Activated T-helper 1 cell treated with anti-CD3 and anti-CD28 coated beads, Interleukin-12 subunit alpha, Interleukin-12 subunit beta, Interleukin-2, Interleukin-4 antibody, amounts not matched to agents 30 ng/mL and 10 ng/mL and 1 ng/mL, durations not matched to agents 14 hours and 24 hours and 36 hours (primary cell): ENCODE measurements at regions of chr10 and their contacts with region 1.

Region 1: GRCh38 chr10:88117869-88118632 is 254.6 kb downstream of the PTEN start:
- DNase-seq: no peak
- H3K4me3 Mint-ChIP-seq: no peak overlapping the region
- H3K27ac Mint-ChIP-seq: no peak overlapping the region
- H3K4me1 Mint-ChIP-seq: peaks cover 18% of the 10 kb centered on the region
- H3K27me3 Mint-ChIP-seq: peaks cover 3% of the 10 kb centered on the region

Region 2: DNA sequence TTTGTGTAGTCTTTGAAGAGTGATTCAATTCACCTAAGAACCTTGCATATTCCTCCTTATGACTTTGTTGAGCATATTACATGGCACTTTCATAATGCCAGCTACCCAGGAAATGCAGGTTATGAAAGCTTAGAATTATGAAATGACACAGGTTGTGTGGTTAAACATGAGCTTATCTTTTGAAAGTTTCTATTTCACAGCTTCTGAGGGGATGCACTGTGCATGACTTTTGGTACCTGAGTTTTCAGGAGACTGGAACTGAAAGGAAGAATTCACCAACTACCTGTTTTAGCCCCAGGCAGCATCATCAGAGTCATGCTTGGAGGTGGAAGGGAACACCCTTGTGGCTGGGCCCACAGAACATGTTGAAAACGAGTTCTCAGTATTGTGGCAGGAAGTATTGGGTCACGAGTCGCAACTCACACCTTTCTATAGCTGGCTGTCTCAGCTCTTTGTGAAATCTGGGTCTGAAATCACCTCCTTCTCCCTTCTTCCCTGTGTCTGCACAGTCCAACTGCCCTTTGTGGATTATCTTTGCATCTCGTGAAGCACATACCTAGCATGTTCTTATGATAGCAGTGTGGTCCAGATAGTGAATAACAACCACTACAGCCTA is 26.5 kb before region 1 on chr10:
- intact Hi-C with region 1: loop called (anchors 1 kb)
- DNase-seq: peak; percentile 76
- H3K4me3 Mint-ChIP-seq: peak overlapping the region; percentile 13
- H3K27ac Mint-ChIP-seq: peak overlapping the region; percentile 68
- H3K4me1 Mint-ChIP-seq: peaks cover 35% of the 10 kb centered on the region
- H3K27me3 Mint-ChIP-seq: peaks cover 29% of the 10 kb centered on the region

Region 3: DNA sequence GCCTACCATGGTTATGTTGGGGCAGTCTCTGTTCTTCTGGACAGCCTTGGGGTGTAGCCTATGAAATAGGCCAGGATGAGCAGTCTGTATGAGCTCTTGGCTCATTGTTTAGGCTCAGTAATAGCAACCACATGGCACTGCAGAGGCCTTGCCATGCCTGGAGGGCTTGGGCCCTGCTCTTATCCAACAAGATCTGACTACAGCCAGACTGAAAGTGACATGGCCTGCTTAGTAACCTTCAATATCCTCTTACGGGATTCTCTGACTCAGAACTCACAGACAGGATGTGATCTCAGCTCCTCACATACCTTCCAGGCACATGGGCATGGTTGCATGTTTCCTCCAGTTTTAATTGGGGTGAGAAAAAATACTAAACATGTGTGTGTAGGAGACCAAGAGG is 34.7 kb after region 1 on chr10:
- intact Hi-C with region 1: loop called (anchors 1 kb)
- DNase-seq: peak; percentile 57
- H3K4me3 Mint-ChIP-seq: peak overlapping the region; percentile 54
- H3K27ac Mint-ChIP-seq: peak overlapping the region; percentile 97
- H3K4me1 Mint-ChIP-seq: peaks cover 37% of the 10 kb centered on the region
- H3K27me3 Mint-ChIP-seq: peaks cover 5% of the 10 kb centered on the region

Region 4: GRCh38 chr10:88330174-88330573 is 212.1 kb after region 1 on chr10:
- intact Hi-C with region 1: no loop called
- DNase-seq: no peak
- H3K4me3 Mint-ChIP-seq: no peak overlapping the region
- H3K27ac Mint-ChIP-seq: no peak overlapping the region
- H3K4me1 Mint-ChIP-seq: peaks cover 13% of the 10 kb centered on the region
- H3K27me3 Mint-ChIP-seq: peaks cover 7% of the 10 kb centered on the region

Region 5: DNA sequence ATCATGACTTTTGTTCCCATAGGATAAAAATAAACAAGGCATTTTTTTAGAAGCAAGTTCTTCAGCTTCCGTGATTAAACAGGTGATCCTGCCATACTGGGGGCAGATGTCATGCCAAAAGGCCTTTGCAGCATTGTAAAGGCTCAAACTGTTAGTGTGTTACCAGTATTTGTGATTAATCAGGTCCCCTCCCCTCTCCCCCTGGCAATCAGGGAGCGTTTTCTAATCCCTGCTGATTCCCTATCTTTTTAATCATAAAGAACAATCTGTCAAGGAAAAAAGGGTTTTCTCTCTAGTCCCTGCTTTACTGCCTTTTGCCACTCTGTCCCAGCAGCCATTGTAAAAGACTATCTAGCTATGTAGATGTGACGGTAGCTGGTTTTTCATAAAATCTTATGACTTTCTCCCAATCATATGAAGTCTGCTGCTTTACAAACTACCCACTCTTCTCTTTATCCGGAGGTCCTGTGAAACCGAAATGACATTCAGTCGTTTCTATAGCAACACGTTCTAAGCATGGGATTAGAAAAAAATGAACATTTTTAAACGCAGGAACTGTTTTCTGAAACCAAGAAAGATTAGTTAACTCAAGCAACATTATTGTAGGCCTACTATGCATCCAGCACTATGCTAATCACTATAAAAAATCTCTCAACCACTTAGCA is 254.1 kb after region 1 on chr10:
- intact Hi-C with region 1: no loop called
- DNase-seq: no peak
- H3K4me3 Mint-ChIP-seq: no peak overlapping the region
- H3K27ac Mint-ChIP-seq: no peak overlapping the region
- H3K4me1 Mint-ChIP-seq: no peaks in the 10 kb centered on the region
- H3K27me3 Mint-ChIP-seq: no peaks in the 10 kb centered on the region

Region 6: DNA sequence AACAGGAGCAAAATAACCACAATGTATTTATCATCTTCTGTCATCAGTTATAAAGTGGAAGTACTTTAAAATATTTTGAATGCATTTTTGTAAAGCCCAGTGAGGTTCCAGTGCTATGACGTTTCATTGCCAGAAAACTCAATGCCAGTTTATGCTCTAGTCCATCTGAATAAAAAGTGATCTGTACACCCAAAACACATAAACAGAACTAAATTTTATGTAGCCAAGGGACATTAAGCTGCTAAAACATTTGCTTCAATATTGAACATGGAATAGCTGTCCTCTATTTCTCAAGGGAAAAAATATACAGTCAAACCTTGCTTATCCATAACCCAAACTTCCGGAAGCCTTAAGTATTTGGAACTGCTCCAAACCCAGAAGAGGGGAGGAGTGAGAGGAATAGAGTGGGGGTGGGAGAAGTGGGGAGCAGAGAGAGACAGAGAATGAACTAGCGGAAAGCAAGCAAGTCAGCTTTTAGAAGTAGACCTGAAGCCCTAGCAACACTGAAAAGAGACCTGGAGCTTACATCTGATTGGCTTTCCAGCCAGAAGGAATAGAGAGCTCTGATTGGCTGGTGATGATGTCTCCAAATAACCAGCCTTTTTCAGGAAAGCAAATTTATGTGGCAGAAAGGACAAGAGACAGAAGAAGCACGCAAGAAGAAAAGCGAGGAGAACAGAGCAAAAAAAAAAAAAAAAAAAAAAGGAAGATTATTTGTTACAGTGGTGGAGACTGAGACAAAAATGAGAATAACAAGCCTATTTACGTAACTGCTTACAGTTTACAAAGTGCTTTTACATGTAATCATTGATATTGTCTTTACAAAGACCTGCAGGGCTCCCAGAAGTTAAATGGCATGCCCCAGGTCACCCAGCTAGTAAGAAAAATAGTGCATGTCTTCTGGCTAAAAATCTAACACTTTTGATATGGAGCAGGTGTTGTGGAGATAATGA is 269.0 kb after region 1 on chr10:
- intact Hi-C with region 1: loop called (anchors 1 kb)
- DNase-seq: no peak
- H3K4me3 Mint-ChIP-seq: no peak overlapping the region
- H3K27ac Mint-ChIP-seq: no peak overlapping the region
- H3K4me1 Mint-ChIP-seq: peaks cover 16% of the 10 kb centered on the region
- H3K27me3 Mint-ChIP-seq: no peaks in the 10 kb centered on the region